MCF 10A (cell line): ENCODE measurements at regions of chr1 and their contacts with region 1.

Region 1: DNA sequence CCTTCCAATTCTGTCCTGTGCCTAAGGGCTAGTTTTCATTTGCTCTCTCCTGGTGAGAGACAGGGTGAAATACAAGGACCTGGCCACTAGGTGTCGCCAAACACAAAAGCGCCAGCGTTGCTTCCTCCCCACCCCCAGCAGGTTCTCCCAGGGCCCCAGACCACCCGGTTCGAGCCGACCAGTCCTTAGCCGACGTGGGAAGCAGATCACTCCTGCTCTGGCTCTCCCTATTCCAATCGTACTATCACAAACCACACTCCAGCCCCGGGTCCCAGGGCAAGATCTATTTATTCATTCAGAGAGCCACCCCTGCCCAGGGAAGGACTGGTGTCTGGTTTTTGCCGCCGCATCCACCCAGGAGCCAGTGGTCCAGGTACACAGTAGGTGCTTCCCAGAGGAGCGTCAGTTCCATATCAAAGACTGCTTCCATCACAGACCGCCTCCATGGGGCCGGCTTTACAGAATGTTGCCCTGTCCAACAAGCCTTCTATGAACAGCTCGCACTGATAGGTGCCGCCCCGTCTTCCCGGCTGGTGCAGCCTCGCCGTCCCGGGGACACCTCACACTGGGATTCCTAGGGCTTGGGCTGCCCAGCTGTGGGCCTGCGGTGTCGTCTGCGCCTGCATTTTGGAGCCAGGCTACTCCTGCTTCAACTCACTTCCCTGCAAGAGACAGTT is 35.0 kb downstream of the CTNNBIP1 start:
- DNase-seq: peak; percentile 73
- H3K4me3 Mint-ChIP-seq: no peak overlapping the region
- H3K27ac Mint-ChIP-seq: no peak overlapping the region
- H3K4me1 Mint-ChIP-seq: peaks cover 11% of the 10 kb centered on the region
- H3K27me3 Mint-ChIP-seq: no peaks in the 10 kb centered on the region
- CTCF ChIP-seq: peak; percentile 88

Region 2: DNA sequence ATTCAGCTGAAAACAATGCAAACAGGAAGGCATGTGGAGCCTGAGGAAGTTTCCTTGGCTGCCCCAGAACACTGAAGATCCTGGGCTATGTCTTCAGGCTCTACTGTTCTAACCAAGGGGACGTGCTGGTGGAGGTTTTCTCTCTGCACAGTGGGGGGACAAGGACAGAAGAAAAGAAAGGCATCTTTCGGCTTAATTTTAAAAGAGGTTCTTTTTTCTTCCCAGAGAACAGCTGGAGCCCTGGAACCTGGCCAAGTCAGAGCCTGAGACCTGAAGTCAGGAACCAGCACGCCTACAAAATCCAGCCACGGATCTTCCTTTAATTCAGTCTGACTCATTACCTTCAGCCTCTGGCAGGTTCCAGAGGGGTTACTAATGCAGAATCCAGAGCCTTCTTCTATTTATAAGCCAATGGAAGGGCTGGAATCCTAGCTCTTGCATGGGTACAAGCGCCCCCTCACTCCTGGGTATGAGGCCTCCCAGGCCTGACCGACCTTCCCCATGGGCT is 15.2 kb after region 1 on chr1:
- CTCF ChIA-PET with region 1: interaction called, 15 read pairs
- POLR2A ChIA-PET with region 1: interaction called, 22 read pairs
- intact Hi-C with region 1: no loop called
- DNase-seq: peak; percentile 96
- H3K4me3 Mint-ChIP-seq: peak overlapping the region; percentile 59
- H3K27ac Mint-ChIP-seq: peak overlapping the region; percentile 81
- H3K4me1 Mint-ChIP-seq: peaks cover 42% of the 10 kb centered on the region
- H3K27me3 Mint-ChIP-seq: no peaks in the 10 kb centered on the region
- CTCF ChIP-seq: no peak

Region 3: DNA sequence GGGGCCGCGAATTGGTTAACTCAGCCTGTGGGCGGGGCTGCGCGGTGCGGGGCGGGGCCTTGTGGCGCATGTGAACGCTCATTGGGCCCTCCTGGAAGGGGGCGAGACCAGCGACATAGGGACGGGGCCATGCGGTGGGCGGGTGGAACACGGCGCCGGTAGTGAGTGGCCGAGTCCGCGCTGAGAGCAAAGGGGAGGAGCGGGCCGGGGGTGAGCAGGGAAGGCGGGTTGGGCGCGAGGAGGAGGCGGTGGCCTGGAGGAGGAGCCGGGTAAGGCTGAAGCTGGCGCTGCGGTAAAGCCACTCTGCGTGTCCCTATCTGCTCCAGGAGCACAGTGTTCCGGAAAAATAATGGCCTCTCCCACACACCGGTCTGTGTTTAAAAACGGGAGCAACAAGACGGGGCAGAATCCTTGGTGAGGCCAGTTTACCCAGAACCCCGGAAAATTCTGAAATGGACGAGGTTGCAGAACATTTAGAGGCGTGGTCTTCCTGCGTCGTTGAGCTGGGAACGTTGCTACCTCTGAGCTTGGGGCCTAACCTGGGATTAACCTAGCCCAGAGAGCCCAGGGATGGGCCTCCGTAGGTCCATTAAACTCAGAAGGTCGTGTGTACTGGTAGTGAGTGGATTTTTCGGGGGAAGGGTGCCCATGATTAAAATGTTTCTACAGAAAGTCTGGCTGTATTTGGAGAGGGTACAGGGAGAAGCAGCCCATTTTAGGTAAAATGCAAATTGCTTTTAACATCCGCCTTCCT is 35.5 kb after region 1 on chr1:
- CTCF ChIA-PET with region 1: interaction called, 102 read pairs
- POLR2A ChIA-PET with region 1: interaction called, 15 read pairs
- intact Hi-C with region 1: loop called (anchors 1 kb)
- DNase-seq: peak; percentile 99
- H3K4me3 Mint-ChIP-seq: peak overlapping the region; percentile 93
- H3K27ac Mint-ChIP-seq: peak overlapping the region; percentile 99
- H3K4me1 Mint-ChIP-seq: peaks cover 30% of the 10 kb centered on the region
- H3K27me3 Mint-ChIP-seq: no peaks in the 10 kb centered on the region
- CTCF ChIP-seq: no peak